Left ventricle myocardium inferior (tissue), 1 donor: ENCODE measurements at regions of chr17 and their contacts with region 1.

Region 1: GRCh38 chr17:12667299-12667958 is 1.7 kb downstream of the MYOCD start:
- DNase-seq: no peak
- H3K4me3 ChIP-seq: peak overlapping the region; percentile 75
- H3K27ac ChIP-seq: peak overlapping the region; percentile 80
- H3K4me1 ChIP-seq: peaks cover 38% of the 10 kb centered on the region
- H3K27me3 ChIP-seq: peaks cover 27% of the 10 kb centered on the region
- CTCF ChIP-seq: peak; percentile 61

Region 2: GRCh38 chr17:12256380-12256995 is 410.9 kb before region 1 on chr17:
- intact Hi-C with region 1: loop called (anchors 10 kb)
- DNase-seq: no peak
- H3K4me3 ChIP-seq: no peak overlapping the region
- H3K27ac ChIP-seq: no peak overlapping the region
- H3K4me1 ChIP-seq: peaks cover 29% of the 10 kb centered on the region
- H3K27me3 ChIP-seq: no peaks in the 10 kb centered on the region
- CTCF ChIP-seq: peak; percentile 81

Region 3: DNA sequence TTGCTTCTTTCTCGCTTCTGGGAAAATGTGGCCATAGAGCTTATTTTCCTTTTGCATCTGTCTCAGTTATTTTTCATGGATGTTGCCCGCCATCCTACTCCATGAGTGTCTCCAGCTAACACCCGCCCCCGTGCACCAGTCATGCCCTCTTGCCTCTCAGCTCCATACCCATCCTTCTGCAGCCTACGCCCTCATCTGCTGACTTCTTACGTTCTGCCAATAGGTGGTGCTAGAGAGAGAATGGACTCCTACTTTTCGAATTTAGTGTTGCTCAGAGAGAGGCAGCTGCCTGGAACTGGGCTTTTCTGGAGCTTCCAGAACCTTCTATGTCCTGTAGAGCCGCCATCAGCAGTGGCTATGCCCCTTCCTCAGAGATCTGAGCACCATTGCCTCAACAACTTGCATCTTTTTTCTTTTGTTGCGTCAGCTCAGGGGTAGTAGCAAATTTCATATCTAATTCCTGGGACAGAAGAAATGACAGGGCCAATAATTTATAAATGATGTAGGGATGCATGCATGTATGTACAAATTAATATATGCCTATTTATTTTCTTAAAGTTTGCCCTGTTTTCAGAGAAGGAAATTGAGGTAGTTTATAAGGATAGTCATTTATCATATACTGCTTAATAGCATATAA is 121.4 kb before region 1 on chr17:
- intact Hi-C with region 1: loop called (anchors 5 kb)
- DNase-seq: no peak
- H3K4me3 ChIP-seq: no peak overlapping the region
- H3K27ac ChIP-seq: no peak overlapping the region
- H3K4me1 ChIP-seq: peaks cover 20% of the 10 kb centered on the region
- H3K27me3 ChIP-seq: no peaks in the 10 kb centered on the region
- CTCF ChIP-seq: peak; percentile 77

Region 4: GRCh38 chr17:12566291-12566690 is 101.1 kb before region 1 on chr17:
- intact Hi-C with region 1: no loop called
- DNase-seq: no peak
- H3K4me3 ChIP-seq: no peak overlapping the region
- H3K27ac ChIP-seq: no peak overlapping the region
- H3K4me1 ChIP-seq: peaks cover 18% of the 10 kb centered on the region
- H3K27me3 ChIP-seq: no peaks in the 10 kb centered on the region
- CTCF ChIP-seq: no peak

Region 5: GRCh38 chr17:12605222-12605621 is 62.2 kb before region 1 on chr17:
- intact Hi-C with region 1: no loop called
- DNase-seq: no peak
- H3K4me3 ChIP-seq: no peak overlapping the region
- H3K27ac ChIP-seq: no peak overlapping the region
- H3K4me1 ChIP-seq: no peaks in the 10 kb centered on the region
- H3K27me3 ChIP-seq: no peaks in the 10 kb centered on the region
- CTCF ChIP-seq: no peak

Region 6: DNA sequence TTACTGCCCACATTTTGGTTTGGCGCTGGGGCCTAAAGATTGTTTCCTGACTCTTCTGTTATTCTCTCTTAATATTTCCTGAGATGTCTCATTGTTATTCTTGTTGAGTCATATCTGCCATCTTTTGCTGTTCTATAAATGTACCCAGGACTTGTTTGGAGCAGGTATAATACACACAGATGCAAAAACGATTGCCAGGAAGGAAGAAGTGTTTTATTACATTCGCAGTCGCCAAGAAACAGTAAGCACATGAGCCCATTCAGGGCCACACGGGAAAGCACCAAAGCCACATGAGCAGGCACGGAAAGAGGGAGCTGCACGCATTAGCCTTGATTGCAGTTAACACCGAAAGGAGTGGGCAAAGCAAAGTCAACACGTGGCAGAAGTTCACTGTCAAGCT is 192.1 kb after region 1 on chr17:
- intact Hi-C with region 1: no loop called
- DNase-seq: no peak
- H3K4me3 ChIP-seq: no peak overlapping the region
- H3K27ac ChIP-seq: no peak overlapping the region
- H3K4me1 ChIP-seq: no peaks in the 10 kb centered on the region
- H3K27me3 ChIP-seq: no peaks in the 10 kb centered on the region
- CTCF ChIP-seq: no peak